Common myeloid progenitor, CD34-positive (primary cell): ENCODE measurements at regions of chr12 and their contacts with region 1.

Region 1: DNA sequence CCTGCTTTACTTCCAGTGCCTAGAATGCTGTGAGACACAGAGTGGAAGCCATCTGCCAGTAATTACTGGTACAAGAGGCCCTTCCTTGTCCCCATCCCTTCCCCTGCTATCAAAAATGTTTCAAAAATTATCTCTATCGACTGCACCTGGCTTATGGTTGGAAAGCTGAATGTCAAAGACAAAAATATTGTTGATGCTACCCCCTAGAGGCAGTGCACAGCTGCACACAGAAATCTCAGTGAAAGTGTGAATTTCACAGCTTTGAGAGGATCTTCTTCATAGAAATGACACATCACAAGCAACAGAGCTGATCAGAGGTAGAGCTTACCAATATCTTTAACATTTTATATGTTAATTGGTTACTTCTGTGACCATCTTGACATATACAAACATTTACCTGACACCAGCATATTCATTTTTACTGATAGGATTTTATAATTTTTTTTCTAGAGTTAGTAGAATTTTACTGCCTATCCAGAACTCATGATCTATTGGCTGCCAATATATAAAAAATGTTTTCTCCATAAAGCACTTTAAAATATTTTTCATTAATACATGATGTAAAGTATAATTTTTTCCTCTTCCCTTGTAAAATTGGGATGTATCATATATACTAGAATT is 138.0 kb downstream of the AACS start:
- DNase-seq: peak in 1 of 3 donors; percentile 33
- H3K4me3 ChIP-seq: no peak overlapping the region
- H3K27ac ChIP-seq: no peak overlapping the region
- H3K4me1 ChIP-seq: no peaks in the 10 kb centered on the region
- H3K27me3 ChIP-seq: peaks cover 0 to 47% (median 9%) of the 10 kb centered on the region in 5 experiments

Region 2: GRCh38 chr12:125183187-125184067 is 19.8 kb before region 1 on chr12:
- CTCF ChIA-PET with region 1: interaction called, 17 read pairs
- POLR2A ChIA-PET with region 1: no interaction called
- DNase-seq: peak; percentile 73 to 87 (median 82)
- H3K4me3 ChIP-seq: no peak overlapping the region
- H3K27ac ChIP-seq: no peak overlapping the region
- H3K4me1 ChIP-seq: peaks cover 0 to 21% (median 8%) of the 10 kb centered on the region in 4 experiments
- H3K27me3 ChIP-seq: peaks cover 0 to 67% (median 33%) of the 10 kb centered on the region in 5 experiments

Region 3: DNA sequence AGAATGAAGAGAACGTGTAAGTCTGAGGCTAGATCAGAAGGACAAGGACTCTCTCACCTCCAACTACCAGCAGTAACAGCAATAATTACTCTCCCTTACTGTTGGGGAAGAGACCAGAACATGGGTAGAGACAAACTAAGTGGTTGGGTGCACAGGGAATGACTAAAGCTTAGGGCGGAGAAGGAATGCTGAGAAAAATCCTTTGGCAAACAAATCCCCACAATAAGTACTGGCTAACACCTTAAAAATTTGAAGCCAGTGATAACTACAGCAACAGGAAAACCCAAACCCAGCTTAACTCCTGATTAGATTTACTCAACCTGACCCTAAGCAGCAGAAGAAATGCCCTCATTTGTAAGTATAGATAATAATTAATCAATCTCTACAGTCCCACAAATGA is 621.0 kb after region 1 on chr12:
- CTCF ChIA-PET with region 1: no interaction called
- POLR2A ChIA-PET with region 1: no interaction called
- DNase-seq: no peak
- H3K4me3 ChIP-seq: no peak overlapping the region
- H3K27ac ChIP-seq: no peak overlapping the region
- H3K4me1 ChIP-seq: no peaks in the 10 kb centered on the region
- H3K27me3 ChIP-seq: no peaks in the 10 kb centered on the region